Activated CD4-positive, alpha-beta T cell treated with anti-CD3 and anti-CD28 coated beads for 36 hours (primary cell): ENCODE measurements at regions of chr16 and their contacts with region 1.

Region 1: DNA sequence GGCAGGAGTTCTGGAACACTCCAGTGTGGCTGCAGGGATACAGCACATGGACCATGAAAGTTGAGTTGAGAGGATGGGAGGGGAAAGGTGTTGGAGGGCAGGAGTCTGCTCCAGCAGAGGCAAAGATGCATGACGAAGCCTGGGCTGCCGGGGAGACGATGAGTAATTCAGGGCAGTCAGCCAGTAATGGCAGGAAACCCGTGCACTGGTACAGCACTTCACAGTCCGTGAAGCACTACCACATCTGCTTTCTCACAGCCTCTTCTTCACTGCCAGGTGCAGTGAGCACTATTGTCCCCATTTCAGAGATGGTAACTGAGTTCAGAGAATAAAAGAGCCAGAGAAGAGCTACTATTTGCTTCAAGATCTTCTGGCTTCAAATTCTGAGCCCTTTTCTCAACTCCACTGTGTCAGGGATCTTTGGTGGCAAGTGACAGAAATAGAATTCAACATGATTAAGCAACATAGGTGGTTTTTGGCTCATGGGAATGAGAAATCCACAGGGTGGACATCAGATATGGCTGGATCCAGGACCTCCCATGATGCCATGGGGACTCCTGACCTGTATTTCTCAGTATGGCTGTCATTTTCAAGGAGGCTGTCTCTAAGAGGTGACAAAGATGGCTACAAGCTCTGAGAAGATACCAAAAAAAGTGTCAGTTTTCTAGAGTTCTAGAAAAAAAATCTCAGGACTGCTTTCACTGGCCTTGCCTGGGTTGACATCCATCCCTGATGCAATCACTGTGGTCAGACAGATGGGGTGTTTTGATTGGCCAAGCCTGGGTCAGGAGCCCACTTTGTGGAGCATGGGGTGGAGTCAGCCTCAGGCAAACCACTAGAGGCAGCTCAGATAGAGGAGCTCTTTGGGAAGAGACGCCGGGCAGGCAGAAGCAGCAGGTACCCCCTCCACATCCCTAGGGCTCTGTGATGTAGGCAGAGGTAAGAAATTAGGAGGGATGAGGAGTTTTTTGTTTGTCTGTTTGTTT is 24.7 kb downstream of the IL21R start:
- DNase-seq: peak; percentile 90
- ATAC-seq: peak; percentile 94
- H3K4me3 Mint-ChIP-seq: peak overlapping the region; percentile 43
- H3K27ac Mint-ChIP-seq: peak overlapping the region; percentile 92
- H3K4me1 Mint-ChIP-seq: peaks cover 82% of the 10 kb centered on the region
- H3K27me3 Mint-ChIP-seq: no peaks in the 10 kb centered on the region

Region 2: GRCh38 chr16:27005386-27005785 is 421.3 kb before region 1 on chr16:
- CTCF ChIA-PET with region 1: no interaction called
- POLR2A ChIA-PET with region 1: no interaction called
- intact Hi-C with region 1: no loop called
- DNase-seq: no peak
- ATAC-seq: no peak
- H3K4me3 Mint-ChIP-seq: no peak overlapping the region
- H3K27ac Mint-ChIP-seq: no peak overlapping the region
- H3K4me1 Mint-ChIP-seq: no peaks in the 10 kb centered on the region
- H3K27me3 Mint-ChIP-seq: peaks cover 28% of the 10 kb centered on the region

Region 3: GRCh38 chr16:27414758-27415431 is 11.8 kb before region 1 on chr16:
- CTCF ChIA-PET with region 1: no interaction called
- POLR2A ChIA-PET with region 1: no interaction called
- intact Hi-C with region 1: no loop called
- DNase-seq: no peak
- ATAC-seq: no peak
- H3K4me3 Mint-ChIP-seq: no peak overlapping the region
- H3K27ac Mint-ChIP-seq: peak overlapping the region; percentile 55
- H3K4me1 Mint-ChIP-seq: peaks cover 77% of the 10 kb centered on the region
- H3K27me3 Mint-ChIP-seq: no peaks in the 10 kb centered on the region

Region 4: GRCh38 chr16:27439273-27440018 is 12.7 kb after region 1 on chr16:
- CTCF ChIA-PET with region 1: no interaction called
- POLR2A ChIA-PET with region 1: no interaction called
- intact Hi-C with region 1: no loop called
- DNase-seq: peak; percentile 2
- ATAC-seq: no peak
- H3K4me3 Mint-ChIP-seq: no peak overlapping the region
- H3K27ac Mint-ChIP-seq: peak overlapping the region; percentile 8
- H3K4me1 Mint-ChIP-seq: peaks cover 11% of the 10 kb centered on the region
- H3K27me3 Mint-ChIP-seq: no peaks in the 10 kb centered on the region

Region 5: GRCh38 chr16:27449434-27450195 is 22.9 kb after region 1 on chr16:
- CTCF ChIA-PET with region 1: interaction called, 3 read pairs
- POLR2A ChIA-PET with region 1: no interaction called
- intact Hi-C with region 1: loop called (anchors 2 kb)
- DNase-seq: peak; percentile 85
- ATAC-seq: peak; percentile 60
- H3K4me3 Mint-ChIP-seq: peak overlapping the region; percentile 26
- H3K27ac Mint-ChIP-seq: peak overlapping the region; percentile 89
- H3K4me1 Mint-ChIP-seq: peaks cover 84% of the 10 kb centered on the region
- H3K27me3 Mint-ChIP-seq: no peaks in the 10 kb centered on the region

Region 6: GRCh38 chr16:27468941-27469531 is 42.3 kb after region 1 on chr16:
- CTCF ChIA-PET with region 1: no interaction called
- POLR2A ChIA-PET with region 1: no interaction called
- intact Hi-C with region 1: no loop called
- DNase-seq: no peak
- ATAC-seq: no peak
- H3K4me3 Mint-ChIP-seq: no peak overlapping the region
- H3K27ac Mint-ChIP-seq: no peak overlapping the region
- H3K4me1 Mint-ChIP-seq: peaks cover under 1% of the 10 kb centered on the region
- H3K27me3 Mint-ChIP-seq: no peaks in the 10 kb centered on the region